ENCODE measurements at regions of chr1 and their contacts with region 1.

Region 1: DNA sequence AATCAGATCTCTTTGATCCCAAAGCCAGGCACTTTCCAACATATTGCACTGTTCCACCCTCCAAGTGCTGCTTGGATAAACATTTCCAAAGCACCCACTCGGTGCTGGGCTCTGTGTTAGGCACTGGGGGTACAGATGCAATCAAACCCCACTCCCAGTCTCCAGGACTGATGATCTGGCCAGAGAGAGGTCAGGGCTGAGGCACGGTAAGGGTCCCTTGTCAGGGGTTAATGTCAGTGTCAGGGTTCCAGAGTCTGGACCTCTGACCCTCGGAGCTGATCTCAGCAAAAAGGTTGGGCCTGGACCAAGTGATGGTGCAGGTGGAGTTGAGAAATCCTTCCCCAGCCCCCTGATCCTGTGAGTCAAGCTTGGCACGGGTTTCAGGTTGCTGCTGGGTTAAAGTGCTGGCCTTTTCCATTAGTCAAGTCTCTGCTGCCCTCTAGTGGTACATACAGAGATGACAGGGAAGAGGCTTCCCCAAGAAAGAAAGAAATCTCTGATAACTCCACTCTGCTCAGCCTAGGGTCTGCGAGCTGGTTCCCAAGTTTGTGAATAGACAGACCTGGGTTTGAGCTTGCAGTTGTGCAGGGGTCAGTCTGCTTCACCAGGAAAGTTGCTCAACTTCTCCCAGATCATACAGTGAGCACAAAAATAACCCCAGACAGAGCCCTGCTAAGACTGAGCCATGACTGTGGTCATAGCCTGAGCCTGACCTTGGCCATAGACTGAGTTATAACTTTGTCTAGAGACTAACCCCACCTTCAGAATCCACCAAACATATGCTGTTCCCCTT is 74.6 kb downstream of the DMRTA2 start:
- DNase-seq: peak; percentile 86
- H3K4me3 Mint-ChIP-seq: no peak overlapping the region
- H3K27ac Mint-ChIP-seq: no peak overlapping the region
- H3K4me1 Mint-ChIP-seq: no peaks in the 10 kb centered on the region
- H3K27me3 Mint-ChIP-seq: peaks cover 14% of the 10 kb centered on the region
- CTCF ChIP-seq: peak; percentile 85

Region 2: GRCh38 chr1:48552420-48552819 is 1796.2 kb before region 1 on chr1:
- CTCF ChIA-PET with region 1: interaction called, 3 read pairs
- POLR2A ChIA-PET with region 1: interaction called, 3 read pairs
- intact Hi-C with region 1: loop called (anchors 10 kb)
- DNase-seq: peak; percentile 47
- H3K4me3 Mint-ChIP-seq: no peak overlapping the region
- H3K27ac Mint-ChIP-seq: no peak overlapping the region
- H3K4me1 Mint-ChIP-seq: peaks cover 13% of the 10 kb centered on the region
- H3K27me3 Mint-ChIP-seq: peaks cover 20% of the 10 kb centered on the region
- CTCF ChIP-seq: peak; percentile 23

Region 3: DNA sequence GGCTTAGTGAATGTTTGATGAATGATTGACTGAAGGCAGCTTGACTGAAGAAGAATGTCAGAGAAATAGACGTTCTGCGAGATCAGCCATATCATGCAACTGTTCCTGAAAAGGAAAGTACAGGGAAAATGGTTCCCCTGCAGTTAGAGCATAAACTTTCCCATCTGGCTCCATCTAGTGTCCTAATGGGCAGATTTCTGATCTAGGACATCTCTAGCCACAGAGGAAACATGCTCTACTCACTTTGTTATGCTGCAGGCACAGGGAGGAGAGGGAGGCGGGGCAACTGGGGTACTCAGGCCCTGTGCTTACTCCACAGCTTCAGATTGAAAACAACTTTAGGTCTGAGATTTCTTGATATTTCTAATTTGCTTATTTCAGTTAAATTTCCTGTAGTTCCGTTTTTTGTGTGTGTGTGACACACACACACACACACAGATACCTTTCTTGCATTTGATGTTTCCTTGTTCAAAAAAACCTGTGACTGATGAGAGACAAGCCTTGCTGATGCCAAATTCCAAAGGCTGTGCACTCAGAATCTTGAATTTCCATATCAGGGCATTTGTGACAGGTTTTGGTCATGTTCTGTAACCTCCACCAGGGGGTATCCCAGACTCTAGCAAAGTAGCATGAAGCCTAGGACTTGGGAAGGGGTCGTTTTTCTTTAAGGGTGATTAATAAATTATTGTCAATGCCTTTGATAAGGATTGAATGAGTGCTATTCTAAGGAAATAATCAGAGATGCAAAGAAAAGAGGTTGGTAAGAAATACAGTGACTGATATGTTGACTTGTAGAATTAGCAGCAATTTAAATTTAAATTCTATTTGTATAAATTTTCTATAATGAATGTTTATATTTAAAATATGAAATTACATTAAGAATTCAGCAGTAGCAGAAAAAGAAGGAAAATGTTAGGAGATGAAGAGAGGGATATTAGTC is 1432.2 kb before region 1 on chr1:
- CTCF ChIA-PET with region 1: interaction called, 12 read pairs
- POLR2A ChIA-PET with region 1: no interaction called
- intact Hi-C with region 1: loop called (anchors 1 kb)
- DNase-seq: peak; percentile 70
- H3K4me3 Mint-ChIP-seq: no peak overlapping the region
- H3K27ac Mint-ChIP-seq: no peak overlapping the region
- H3K4me1 Mint-ChIP-seq: peaks cover 8% of the 10 kb centered on the region
- H3K27me3 Mint-ChIP-seq: no peaks in the 10 kb centered on the region
- CTCF ChIP-seq: peak; percentile 44

Region 4: GRCh38 chr1:50080909-50081586 is 267.6 kb before region 1 on chr1:
- CTCF ChIA-PET with region 1: interaction called, 4 read pairs
- POLR2A ChIA-PET with region 1: no interaction called
- intact Hi-C with region 1: loop called (anchors 2 kb)
- DNase-seq: peak; percentile 51
- H3K4me3 Mint-ChIP-seq: no peak overlapping the region
- H3K27ac Mint-ChIP-seq: no peak overlapping the region
- H3K4me1 Mint-ChIP-seq: no peaks in the 10 kb centered on the region
- H3K27me3 Mint-ChIP-seq: no peaks in the 10 kb centered on the region
- CTCF ChIP-seq: peak; percentile 31

Region 5: GRCh38 chr1:50123071-50123470 is 225.6 kb before region 1 on chr1:
- CTCF ChIA-PET with region 1: no interaction called
- POLR2A ChIA-PET with region 1: no interaction called
- intact Hi-C with region 1: no loop called
- DNase-seq: no peak
- H3K4me3 Mint-ChIP-seq: no peak overlapping the region
- H3K27ac Mint-ChIP-seq: no peak overlapping the region
- H3K4me1 Mint-ChIP-seq: no peaks in the 10 kb centered on the region
- H3K27me3 Mint-ChIP-seq: peaks cover 33% of the 10 kb centered on the region
- CTCF ChIP-seq: no peak

Region 6: GRCh38 chr1:50358962-50359361 is 10.3 kb after region 1 on chr1:
- CTCF ChIA-PET with region 1: interaction called, 17 read pairs
- POLR2A ChIA-PET with region 1: no interaction called
- intact Hi-C with region 1: no loop called
- DNase-seq: no peak
- H3K4me3 Mint-ChIP-seq: no peak overlapping the region
- H3K27ac Mint-ChIP-seq: no peak overlapping the region
- H3K4me1 Mint-ChIP-seq: no peaks in the 10 kb centered on the region
- H3K27me3 Mint-ChIP-seq: peaks cover 56% of the 10 kb centered on the region
- CTCF ChIP-seq: no peak

Region 7: GRCh38 chr1:50527249-50527986 is 178.8 kb after region 1 on chr1:
- CTCF ChIA-PET with region 1: no interaction called
- POLR2A ChIA-PET with region 1: no interaction called
- intact Hi-C with region 1: no loop called
- DNase-seq: no peak
- H3K4me3 Mint-ChIP-seq: no peak overlapping the region
- H3K27ac Mint-ChIP-seq: no peak overlapping the region
- H3K4me1 Mint-ChIP-seq: no peaks in the 10 kb centered on the region
- H3K27me3 Mint-ChIP-seq: no peaks in the 10 kb centered on the region
- CTCF ChIP-seq: no peak